Ovary (tissue), 10 donors: ENCODE measurements at regions of chr1 and their contacts with region 1.

Region 1: DNA sequence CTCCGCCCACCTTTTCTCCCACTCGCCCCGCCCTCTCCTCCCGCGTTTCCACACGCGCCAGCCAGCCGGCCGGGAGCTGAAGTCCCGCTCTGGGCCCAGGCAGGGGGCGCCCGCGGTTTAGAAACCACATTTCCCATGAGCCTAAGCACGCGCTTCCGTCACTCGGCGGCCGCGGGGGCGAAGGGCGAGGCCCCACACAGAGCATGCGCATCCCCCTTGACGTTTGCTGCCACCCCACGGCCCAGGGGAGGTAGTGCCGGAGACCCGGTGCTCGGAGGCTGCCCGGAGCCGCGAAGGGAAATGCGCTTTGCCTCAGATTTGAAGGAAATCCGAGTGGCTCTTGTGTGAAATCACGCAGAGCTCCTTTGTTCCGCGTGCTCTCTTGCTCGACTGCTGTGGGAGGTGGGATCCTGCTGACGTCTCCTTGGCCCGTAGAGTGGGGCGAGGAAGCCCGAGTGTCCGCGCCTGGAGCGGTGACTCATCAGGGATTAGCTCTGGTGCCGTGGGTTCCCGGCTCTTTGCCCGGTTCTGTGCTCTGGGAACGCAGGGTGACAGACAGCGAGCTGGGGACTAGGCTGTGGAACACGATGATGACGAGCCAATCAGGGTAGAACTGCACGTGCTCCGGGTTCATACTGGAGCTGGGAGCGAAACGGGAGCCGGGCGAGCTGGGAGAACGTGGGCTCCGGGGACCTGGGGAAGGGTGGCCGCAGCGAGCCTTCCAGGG is 407 bp upstream of the B3GALNT2 start:
- DNase-seq: peak; percentile 99 to 100 (median 100)
- H3K4me3 ChIP-seq: peak overlapping the region; percentile 93
- H3K27ac ChIP-seq: peak overlapping the region; percentile 89 to 95
- H3K4me1 ChIP-seq: peaks cover 4% of the 10 kb centered on the region
- H3K27me3 ChIP-seq: no peaks in the 10 kb centered on the region
- CTCF ChIP-seq: peak; percentile 94 to 99 (median 99)
- EP300 ChIP-seq: peak; percentile 2
- POLR2A ChIP-seq: peak; percentile 86

Region 2: DNA sequence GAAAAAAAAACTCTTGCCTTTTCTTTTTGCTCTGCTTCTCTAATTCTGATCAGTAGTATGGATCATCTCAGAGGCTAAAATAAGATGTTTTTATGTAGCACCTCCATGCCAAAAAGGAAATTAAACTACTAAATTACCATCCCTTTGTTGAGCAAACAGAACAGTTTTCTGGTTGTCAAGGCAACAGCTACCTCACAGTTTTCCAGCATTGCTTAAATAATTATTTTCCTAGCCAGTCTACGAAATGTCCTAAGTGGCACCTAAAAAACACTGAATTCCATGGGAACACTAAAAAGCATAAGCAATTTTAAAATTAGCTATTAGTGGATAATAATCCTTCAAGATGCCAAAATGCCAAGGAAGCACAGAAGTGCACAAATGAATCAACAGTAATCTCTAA is 238.3 kb before region 1 on chr1:
- intact Hi-C with region 1: loop called in 1 of 4 experiments (anchors 5 kb)
- DNase-seq: no peak
- H3K4me3 ChIP-seq: no peak overlapping the region
- H3K27ac ChIP-seq: no peak overlapping the region
- H3K4me1 ChIP-seq: no peaks in the 10 kb centered on the region
- H3K27me3 ChIP-seq: no peaks in the 10 kb centered on the region
- CTCF ChIP-seq: no peak
- EP300 ChIP-seq: no peak
- POLR2A ChIP-seq: no peak

Region 3: GRCh38 chr1:235663628-235664027 is 159.0 kb after region 1 on chr1:
- intact Hi-C with region 1: no loop called
- DNase-seq: no peak
- H3K4me3 ChIP-seq: no peak overlapping the region
- H3K27ac ChIP-seq: no peak overlapping the region
- H3K4me1 ChIP-seq: no peaks in the 10 kb centered on the region
- H3K27me3 ChIP-seq: no peaks in the 10 kb centered on the region
- CTCF ChIP-seq: no peak
- EP300 ChIP-seq: no peak
- POLR2A ChIP-seq: no peak

Region 4: DNA sequence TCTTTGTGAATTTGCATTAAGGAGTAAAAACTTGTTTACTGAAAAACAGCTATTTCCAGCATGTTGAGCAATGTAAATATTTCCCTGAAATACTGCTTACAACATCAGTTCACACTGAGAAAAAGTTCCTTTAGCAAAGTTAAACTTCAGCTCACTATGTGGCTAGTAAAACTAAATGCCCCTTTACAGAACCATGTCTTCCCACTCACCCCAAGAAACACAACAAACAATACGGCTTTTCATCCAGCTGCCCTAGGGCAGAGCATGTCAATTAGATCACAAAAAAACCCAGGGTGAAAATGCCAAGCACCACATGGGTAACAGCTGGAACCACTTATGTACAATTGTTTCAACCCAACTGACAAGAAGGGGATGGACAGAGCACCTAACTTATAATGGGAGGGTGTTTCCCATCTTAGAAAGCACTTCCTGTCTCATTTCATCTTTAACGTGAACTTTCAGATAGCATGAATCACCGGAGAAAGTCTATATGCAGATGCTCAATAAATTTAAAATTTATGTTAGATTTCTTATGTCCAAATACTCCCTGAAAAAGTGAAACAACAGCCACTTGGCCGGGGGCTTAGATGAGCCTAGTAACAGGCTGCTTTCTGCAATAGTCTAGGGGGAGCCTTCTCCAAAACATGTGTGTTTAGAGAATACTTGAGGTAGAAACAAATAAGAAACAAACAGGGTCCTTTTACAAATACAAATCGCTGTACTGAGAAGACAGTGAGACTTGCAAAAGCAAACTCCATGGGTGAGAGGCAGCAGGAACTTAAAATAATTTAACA is 553.7 kb after region 1 on chr1:
- intact Hi-C with region 1: no loop called
- DNase-seq: peak in 1 of 5 donors; percentile 13
- H3K4me3 ChIP-seq: peak overlapping the region; percentile 16
- H3K27ac ChIP-seq: peak overlapping the region in 1 of 2 donors; percentile 10
- H3K4me1 ChIP-seq: peaks cover 9% of the 10 kb centered on the region
- H3K27me3 ChIP-seq: no peaks in the 10 kb centered on the region
- CTCF ChIP-seq: no peak
- EP300 ChIP-seq: no peak
- POLR2A ChIP-seq: no peak